Caco-2 (cell line): ENCODE measurements at regions of chr1 and their contacts with region 1.

Region 1: GRCh38 chr1:208177656-208178055 is 66.5 kb downstream of the PLXNA2 start:
- DNase-seq: peak; percentile 74 to 85
- H3K4me3 ChIP-seq: no peak overlapping the region
- H3K4me3 Mint-ChIP-seq: peak overlapping the region; percentile 55
- H3K27ac Mint-ChIP-seq: peak overlapping the region; percentile 78
- H3K4me1 ChIP-seq: peaks cover 84% of the 10 kb centered on the region
- H3K4me1 Mint-ChIP-seq: peaks cover 66% of the 10 kb centered on the region
- H3K27me3 ChIP-seq: no peaks in the 10 kb centered on the region
- H3K27me3 Mint-ChIP-seq: no peaks in the 10 kb centered on the region
- CTCF ChIP-seq: no peak

Region 2: DNA sequence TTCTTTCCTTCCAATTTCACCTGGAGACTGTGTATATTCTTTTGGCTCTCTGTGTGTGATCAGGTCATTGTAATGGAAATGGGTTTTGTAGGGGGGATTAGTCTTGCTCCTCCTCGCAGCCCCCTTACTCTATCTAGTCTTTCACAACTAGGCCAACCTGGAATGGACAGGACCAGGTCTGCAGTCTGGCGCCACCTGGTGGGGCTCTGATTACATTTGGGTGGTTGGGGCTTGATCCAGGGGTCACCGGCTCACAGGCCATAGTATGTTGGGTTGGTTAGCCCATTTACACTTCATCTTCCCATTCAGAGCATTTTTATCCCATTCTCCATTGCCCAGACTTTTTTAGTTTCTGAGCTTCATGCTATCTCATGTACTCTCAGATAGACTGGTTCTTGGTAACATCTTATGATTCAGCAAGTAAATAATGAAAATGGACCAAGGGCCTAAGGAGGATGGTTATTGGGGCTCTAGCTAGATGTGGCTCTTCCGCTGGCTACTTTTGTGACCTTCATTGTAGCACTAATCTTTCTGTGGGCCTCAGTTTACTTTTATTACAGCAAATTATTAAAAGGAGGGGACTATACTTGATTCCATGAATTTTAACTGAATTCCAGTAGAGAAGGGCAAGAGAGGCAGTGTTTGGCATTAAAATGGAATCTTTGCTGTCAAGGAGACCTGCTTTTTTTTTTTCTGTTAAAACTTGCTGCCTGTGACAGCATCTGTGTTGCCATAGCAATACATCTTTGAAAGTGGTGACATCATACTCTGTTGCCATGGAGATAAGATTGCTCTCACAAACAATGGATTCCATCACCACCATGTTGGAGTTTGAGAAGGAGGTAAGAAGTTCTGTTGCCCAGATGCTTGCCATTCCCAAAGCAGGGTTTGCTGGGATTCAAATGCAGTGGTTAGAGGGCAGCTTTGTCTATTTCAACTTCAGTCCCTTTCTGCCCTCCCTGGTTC is 83.6 kb before region 1 on chr1:
- CTCF ChIA-PET with region 1: no interaction called
- POLR2A ChIA-PET with region 1: no interaction called
- intact Hi-C with region 1: no loop called
- DNase-seq: peak; percentile 74 to 77
- H3K4me3 ChIP-seq: no peak overlapping the region
- H3K4me3 Mint-ChIP-seq: no peak overlapping the region
- H3K27ac Mint-ChIP-seq: no peak overlapping the region
- H3K4me1 ChIP-seq: no peaks in the 10 kb centered on the region
- H3K4me1 Mint-ChIP-seq: no peaks in the 10 kb centered on the region
- H3K27me3 ChIP-seq: no peaks in the 10 kb centered on the region
- H3K27me3 Mint-ChIP-seq: no peaks in the 10 kb centered on the region
- CTCF ChIP-seq: peak; percentile 81 to 92

Region 3: DNA sequence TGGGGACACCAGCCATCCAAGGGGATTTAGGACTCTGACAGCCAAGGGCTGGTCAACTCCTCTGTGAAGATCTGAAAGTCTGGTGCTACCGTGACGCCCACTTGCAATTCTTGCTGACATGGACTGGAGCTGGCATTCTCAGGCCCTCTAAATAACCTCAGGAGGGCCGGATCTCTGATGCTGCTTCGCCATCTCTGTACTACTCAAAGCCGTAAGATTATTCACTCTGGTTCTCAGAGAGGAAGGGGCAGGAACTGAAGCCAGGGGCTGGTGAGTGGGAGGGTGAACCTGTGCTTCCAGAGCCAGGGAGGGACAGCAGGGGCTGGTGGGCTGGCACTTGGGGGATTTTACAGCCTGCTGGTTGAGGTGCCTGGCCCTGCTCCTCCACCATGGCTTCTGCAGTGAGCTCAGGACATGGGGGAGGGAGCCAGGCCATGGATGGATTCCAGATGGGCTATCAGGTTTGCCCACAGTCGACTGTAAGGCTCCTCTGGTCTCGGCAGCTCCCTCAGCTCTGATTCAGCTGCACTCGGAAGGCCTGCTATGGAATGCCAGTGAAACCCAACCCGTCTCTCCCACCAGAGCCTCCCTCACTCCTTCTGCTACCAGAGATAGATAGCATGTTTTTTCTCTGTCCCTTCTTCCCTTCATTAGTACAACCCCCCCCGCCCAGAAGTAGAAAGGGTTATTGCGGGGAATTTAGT is 17.9 kb before region 1 on chr1:
- CTCF ChIA-PET with region 1: no interaction called
- POLR2A ChIA-PET with region 1: interaction called, 6 read pairs
- intact Hi-C with region 1: loop called (anchors 1 kb)
- DNase-seq: no peak
- H3K4me3 ChIP-seq: no peak overlapping the region
- H3K4me3 Mint-ChIP-seq: no peak overlapping the region
- H3K27ac Mint-ChIP-seq: peak overlapping the region; percentile 33
- H3K4me1 ChIP-seq: peaks cover 33% of the 10 kb centered on the region
- H3K4me1 Mint-ChIP-seq: peaks cover 33% of the 10 kb centered on the region
- H3K27me3 ChIP-seq: no peaks in the 10 kb centered on the region
- H3K27me3 Mint-ChIP-seq: no peaks in the 10 kb centered on the region
- CTCF ChIP-seq: no peak

Region 4: GRCh38 chr1:208201229-208201628 is 23.6 kb after region 1 on chr1:
- CTCF ChIA-PET with region 1: interaction called, 3 read pairs
- POLR2A ChIA-PET with region 1: no interaction called
- intact Hi-C with region 1: loop called (anchors 2 kb)
- DNase-seq: peak; percentile 73 to 81
- H3K4me3 ChIP-seq: no peak overlapping the region
- H3K4me3 Mint-ChIP-seq: peak overlapping the region; percentile 13
- H3K27ac Mint-ChIP-seq: peak overlapping the region; percentile 82
- H3K4me1 ChIP-seq: peaks cover 35% of the 10 kb centered on the region
- H3K4me1 Mint-ChIP-seq: peaks cover 22% of the 10 kb centered on the region
- H3K27me3 ChIP-seq: no peaks in the 10 kb centered on the region
- H3K27me3 Mint-ChIP-seq: no peaks in the 10 kb centered on the region
- CTCF ChIP-seq: no peak

Region 5: GRCh38 chr1:208245185-208245705 is 67.6 kb after region 1 on chr1:
- CTCF ChIA-PET with region 1: interaction called, 5 read pairs
- POLR2A ChIA-PET with region 1: no interaction called
- intact Hi-C with region 1: loop called (anchors 2 kb)
- DNase-seq: peak; percentile 83 to 86
- H3K4me3 ChIP-seq: peak overlapping the region; percentile 6; the same call in 1 of the 2 replicates
- H3K4me3 Mint-ChIP-seq: peak overlapping the region; percentile 88
- H3K27ac Mint-ChIP-seq: no peak overlapping the region
- H3K4me1 ChIP-seq: peaks cover 6% of the 10 kb centered on the region
- H3K4me1 Mint-ChIP-seq: peaks cover 7% of the 10 kb centered on the region
- H3K27me3 ChIP-seq: 0 out of 2 replicates have a peak, but pooled peaks cover 1% of the 10 kb centered on the region
- H3K27me3 Mint-ChIP-seq: peaks cover 16% of the 10 kb centered on the region
- CTCF ChIP-seq: peak; percentile 67 to 82

Region 6: DNA sequence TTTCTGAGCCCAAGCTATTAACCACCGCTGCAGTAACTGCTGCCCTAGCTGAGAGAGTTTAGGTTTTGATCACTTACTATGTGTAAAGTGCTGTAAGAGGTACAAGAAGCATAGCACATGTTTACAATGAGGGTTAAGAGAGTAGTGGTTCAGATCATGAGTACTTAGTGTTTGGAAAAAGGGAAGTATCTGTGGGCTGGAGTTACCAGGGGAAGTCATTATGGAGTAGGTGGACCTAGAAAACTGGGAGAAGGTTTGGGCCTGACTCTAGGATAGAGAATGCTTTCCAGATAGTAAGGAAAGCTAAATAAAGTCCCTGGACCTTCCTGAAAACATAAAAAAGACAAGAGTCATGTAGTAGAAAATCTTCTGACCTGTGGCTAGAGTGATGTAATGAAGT is 216.2 kb after region 1 on chr1:
- CTCF ChIA-PET with region 1: no interaction called
- POLR2A ChIA-PET with region 1: no interaction called
- intact Hi-C with region 1: no loop called
- DNase-seq: no peak
- H3K4me3 ChIP-seq: no peak overlapping the region
- H3K4me3 Mint-ChIP-seq: no peak overlapping the region
- H3K27ac Mint-ChIP-seq: no peak overlapping the region
- H3K4me1 ChIP-seq: no peaks in the 10 kb centered on the region
- H3K4me1 Mint-ChIP-seq: no peaks in the 10 kb centered on the region
- H3K27me3 ChIP-seq: no peaks in the 10 kb centered on the region; the same call in 1 of the 2 replicates
- H3K27me3 Mint-ChIP-seq: peaks cover 21% of the 10 kb centered on the region
- CTCF ChIP-seq: no peak